ENCODE measurements at regions of chr13 and their contacts with region 1.

Region 1: DNA sequence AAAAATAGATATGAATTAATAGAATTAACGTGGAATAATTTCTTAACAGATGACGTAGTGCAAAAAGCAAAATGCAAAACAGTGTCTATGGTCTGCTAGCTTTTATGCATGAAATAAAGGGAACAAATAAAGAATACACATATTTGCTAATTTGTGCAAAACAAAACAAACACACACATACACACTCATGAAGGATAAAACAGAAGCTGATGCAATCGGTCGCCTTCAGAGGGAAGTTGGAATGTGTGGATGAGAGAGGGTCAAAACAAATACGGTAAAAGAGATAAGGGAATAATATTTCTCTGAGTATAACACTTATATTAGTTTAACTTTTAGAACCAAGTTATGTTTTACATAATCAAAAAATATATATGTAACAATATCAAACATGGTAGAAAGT is 1160.9 kb upstream of the PCDH9 start:
- DNase-seq: no peak

Region 2: DNA sequence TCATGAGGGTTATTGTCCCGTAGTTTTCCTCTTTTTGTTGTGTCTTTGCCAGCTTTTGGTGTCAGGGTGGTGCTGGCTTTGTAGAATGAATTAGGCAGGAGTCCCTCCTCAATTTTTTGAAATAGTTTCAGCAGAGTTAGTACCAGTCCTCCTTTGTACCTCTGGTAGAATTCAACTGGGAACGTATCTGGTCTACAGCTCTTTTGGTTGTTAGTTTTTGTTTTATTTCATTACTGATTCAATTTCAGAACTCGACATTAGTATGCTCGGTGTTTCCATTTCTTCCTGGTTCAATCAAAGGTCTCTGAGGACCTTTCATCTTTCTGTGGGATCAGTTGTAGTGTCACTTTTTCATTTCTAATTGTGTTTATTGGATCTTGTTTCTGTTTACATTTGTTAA is 76.2 kb after region 1 on chr13:
- intact Hi-C with region 1: loop called in 1 of 2 experiments (anchors 2 kb)
- DNase-seq: no peak